ENCODE measurements at regions of chr11 and their contacts with region 1.

Region 1: GRCh38 chr11:33687733-33688479 is 12.7 kb downstream of the C11orf91 start:
- DNase-seq: peak; percentile 61 to 87
- H3K4me3 ChIP-seq: no peak overlapping the region
- H3K27ac ChIP-seq: peak overlapping the region; percentile 99
- H3K4me1 ChIP-seq: peaks cover 56% of the 10 kb centered on the region
- H3K27me3 ChIP-seq: no peaks in the 10 kb centered on the region
- CTCF ChIP-seq: peak; percentile 97

Region 2: GRCh38 chr11:32960553-32961164 is 727.2 kb before region 1 on chr11:
- CTCF ChIA-PET with region 1: no interaction called
- POLR2A ChIA-PET with region 1: no interaction called
- intact Hi-C with region 1: loop called (anchors 2 kb)
- DNase-seq: peak in 1 of 2 experiments; percentile 59
- H3K4me3 ChIP-seq: no peak overlapping the region
- H3K27ac ChIP-seq: no peak overlapping the region
- H3K4me1 ChIP-seq: no peaks in the 10 kb centered on the region
- H3K27me3 ChIP-seq: no peaks in the 10 kb centered on the region
- CTCF ChIP-seq: peak; percentile 90

Region 3: GRCh38 chr11:33257897-33258630 is 429.8 kb before region 1 on chr11:
- CTCF ChIA-PET with region 1: no interaction called
- POLR2A ChIA-PET with region 1: no interaction called
- intact Hi-C with region 1: loop called (anchors 5 kb)
- DNase-seq: peak; percentile 68 to 85
- H3K4me3 ChIP-seq: peak overlapping the region; percentile 64
- H3K27ac ChIP-seq: peak overlapping the region; percentile 90
- H3K4me1 ChIP-seq: peaks cover 35% of the 10 kb centered on the region
- H3K27me3 ChIP-seq: no peaks in the 10 kb centered on the region
- CTCF ChIP-seq: peak; percentile 22; the same call in 1 of the 2 replicates

Region 4: DNA sequence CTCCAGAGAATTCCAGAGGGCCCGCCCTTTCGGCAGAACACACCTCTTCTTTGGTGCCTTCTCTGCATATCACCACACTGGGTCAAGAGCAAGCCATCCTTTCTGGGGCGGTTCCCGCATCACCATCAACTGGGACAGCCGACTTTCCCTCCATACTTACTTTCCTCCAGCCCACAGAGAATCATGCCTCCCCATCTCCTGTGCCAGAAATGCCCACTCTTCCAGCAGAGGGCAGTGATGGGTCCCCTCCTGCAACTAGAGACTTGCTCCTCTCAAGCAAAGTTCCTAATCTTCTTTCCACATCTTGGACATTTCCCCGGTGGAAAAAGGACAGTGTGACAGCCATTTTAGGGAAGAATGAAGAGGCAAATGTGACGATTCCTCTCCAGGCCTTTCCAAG is 145.0 kb before region 1 on chr11:
- CTCF ChIA-PET with region 1: no interaction called
- POLR2A ChIA-PET with region 1: no interaction called
- intact Hi-C with region 1: loop called (anchors 1 kb)
- DNase-seq: peak in 1 of 2 experiments; percentile 58
- H3K4me3 ChIP-seq: no peak overlapping the region
- H3K27ac ChIP-seq: no peak overlapping the region
- H3K4me1 ChIP-seq: no peaks in the 10 kb centered on the region
- H3K27me3 ChIP-seq: no peaks in the 10 kb centered on the region
- CTCF ChIP-seq: peak; percentile 84

Region 5: GRCh38 chr11:33700425-33701271 is 12.7 kb after region 1 on chr11 and contains the start of gene C11orf91:
- CTCF ChIA-PET with region 1: interaction called, 8 read pairs
- POLR2A ChIA-PET with region 1: interaction called, 11 read pairs
- intact Hi-C with region 1: no loop called
- DNase-seq: peak; percentile 73 to 97
- H3K4me3 ChIP-seq: peak within 1 kb of the TSS; percentile 56
- H3K27ac ChIP-seq: peak within 1 kb of the TSS; percentile 68
- H3K4me1 ChIP-seq: peaks cover 68% of the 10 kb centered on the region
- H3K27me3 ChIP-seq: no peaks in the 10 kb centered on the region
- CTCF ChIP-seq: no peak
- total RNA-seq, gene C11orf91: 0.90 TPM in 1 of 2 replicates, not detected in the other

Region 6: GRCh38 chr11:33742249-33742851 is 54.4 kb after region 1 on chr11:
- CTCF ChIA-PET with region 1: interaction called, 16 read pairs
- POLR2A ChIA-PET with region 1: interaction called, 4 read pairs
- intact Hi-C with region 1: loop called (anchors 1 kb)
- DNase-seq: peak in 1 of 2 experiments; percentile 48
- H3K4me3 ChIP-seq: no peak overlapping the region
- H3K27ac ChIP-seq: no peak overlapping the region
- H3K4me1 ChIP-seq: peaks cover 8% of the 10 kb centered on the region
- H3K27me3 ChIP-seq: no peaks in the 10 kb centered on the region
- CTCF ChIP-seq: peak; percentile 82

Region 7: GRCh38 chr11:33769542-33769941 is 81.6 kb after region 1 on chr11:
- CTCF ChIA-PET with region 1: no interaction called
- POLR2A ChIA-PET with region 1: no interaction called
- intact Hi-C with region 1: no loop called
- DNase-seq: peak; percentile 33 to 90
- H3K4me3 ChIP-seq: no peak overlapping the region
- H3K27ac ChIP-seq: peak overlapping the region; percentile 49
- H3K4me1 ChIP-seq: peaks cover 46% of the 10 kb centered on the region
- H3K27me3 ChIP-seq: no peaks in the 10 kb centered on the region
- CTCF ChIP-seq: no peak

Region 8: GRCh38 chr11:34021977-34022735 is 334.2 kb after region 1 on chr11:
- CTCF ChIA-PET with region 1: no interaction called
- POLR2A ChIA-PET with region 1: no interaction called
- intact Hi-C with region 1: no loop called
- DNase-seq: no peak
- H3K4me3 ChIP-seq: no peak overlapping the region
- H3K27ac ChIP-seq: no peak overlapping the region
- H3K4me1 ChIP-seq: no peaks in the 10 kb centered on the region
- H3K27me3 ChIP-seq: no peaks in the 10 kb centered on the region
- CTCF ChIP-seq: no peak

Region 9: GRCh38 chr11:34075178-34075820 is 387.4 kb after region 1 on chr11:
- CTCF ChIA-PET with region 1: no interaction called
- POLR2A ChIA-PET with region 1: no interaction called
- intact Hi-C with region 1: no loop called
- DNase-seq: peak; percentile 21 to 87
- H3K4me3 ChIP-seq: no peak overlapping the region
- H3K27ac ChIP-seq: peak overlapping the region; percentile 92
- H3K4me1 ChIP-seq: peaks cover 43% of the 10 kb centered on the region
- H3K27me3 ChIP-seq: no peaks in the 10 kb centered on the region
- CTCF ChIP-seq: no peak

Measured in PC-9 (cell line).